ENCODE measurements at regions of chr3 and their contacts with region 1.

Region 1: GRCh38 chr3:130276203-130276803 is 69.2 kb upstream of the COL6A5 start:
- H3K4me3 Mint-ChIP-seq: no peak overlapping the region
- H3K27ac Mint-ChIP-seq: no peak overlapping the region
- H3K4me1 Mint-ChIP-seq: no peaks in the 10 kb centered on the region
- H3K27me3 Mint-ChIP-seq: no peaks in the 10 kb centered on the region

Region 2: DNA sequence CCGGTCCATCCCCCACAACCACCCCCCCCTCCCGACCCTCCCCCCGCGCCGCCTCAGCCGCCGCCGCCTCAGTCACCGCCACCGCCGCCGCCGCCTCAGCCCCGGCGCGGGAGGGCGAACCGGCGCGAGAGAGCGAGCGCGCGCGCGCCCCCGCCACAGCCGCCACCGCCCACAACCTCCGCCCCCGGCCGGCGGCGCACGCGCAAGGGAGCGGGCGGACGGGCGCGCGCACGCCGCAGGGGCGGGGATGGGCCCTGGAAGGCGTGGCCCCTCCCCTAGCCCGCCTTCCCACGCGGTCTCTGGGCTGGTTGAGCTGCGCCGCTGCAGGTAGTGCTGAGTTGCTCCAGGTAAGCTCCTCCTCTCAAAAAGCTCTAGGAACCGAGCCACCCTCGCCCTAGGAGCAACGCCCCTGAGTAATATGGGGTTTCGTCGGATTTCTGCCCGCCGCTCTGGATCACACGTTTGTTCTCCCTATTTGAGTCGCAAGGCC is 382.7 kb before region 1 on chr3 and contains the start of gene TMCC1:
- intact Hi-C with region 1: no loop called
- H3K4me3 Mint-ChIP-seq: peak within 1 kb of the TSS; percentile 83
- H3K27ac Mint-ChIP-seq: peak within 1 kb of the TSS; percentile 87
- H3K4me1 Mint-ChIP-seq: peaks cover 47% of the 10 kb centered on the region
- H3K27me3 Mint-ChIP-seq: no peaks in the 10 kb centered on the region

Region 3: DNA sequence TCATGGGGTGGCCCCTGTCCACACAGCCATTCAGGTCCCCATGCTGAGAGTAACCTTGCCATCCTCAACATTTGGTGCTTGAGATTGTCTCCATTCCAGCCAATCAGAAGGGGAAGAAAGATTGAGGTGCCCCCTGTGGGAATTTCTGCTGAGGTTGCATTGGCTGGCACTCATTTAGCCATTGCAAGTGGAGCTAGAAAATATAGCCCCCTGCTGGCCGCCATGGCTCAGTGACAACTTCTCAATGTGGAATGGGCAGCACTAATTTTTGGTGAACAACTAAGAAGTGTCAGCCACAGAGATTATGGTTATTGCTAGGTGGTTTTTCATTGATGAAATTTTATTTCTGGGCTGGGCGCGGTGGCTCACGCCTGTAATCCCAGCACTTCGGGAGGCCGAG is 262.7 kb after region 1 on chr3:
- intact Hi-C with region 1: loop called (anchors 1 kb)
- H3K4me3 Mint-ChIP-seq: no peak overlapping the region
- H3K27ac Mint-ChIP-seq: no peak overlapping the region
- H3K4me1 Mint-ChIP-seq: peaks cover 5% of the 10 kb centered on the region
- H3K27me3 Mint-ChIP-seq: peaks cover 2% of the 10 kb centered on the region